ENCODE measurements at regions of chr17 and their contacts with region 1.

Region 1: DNA sequence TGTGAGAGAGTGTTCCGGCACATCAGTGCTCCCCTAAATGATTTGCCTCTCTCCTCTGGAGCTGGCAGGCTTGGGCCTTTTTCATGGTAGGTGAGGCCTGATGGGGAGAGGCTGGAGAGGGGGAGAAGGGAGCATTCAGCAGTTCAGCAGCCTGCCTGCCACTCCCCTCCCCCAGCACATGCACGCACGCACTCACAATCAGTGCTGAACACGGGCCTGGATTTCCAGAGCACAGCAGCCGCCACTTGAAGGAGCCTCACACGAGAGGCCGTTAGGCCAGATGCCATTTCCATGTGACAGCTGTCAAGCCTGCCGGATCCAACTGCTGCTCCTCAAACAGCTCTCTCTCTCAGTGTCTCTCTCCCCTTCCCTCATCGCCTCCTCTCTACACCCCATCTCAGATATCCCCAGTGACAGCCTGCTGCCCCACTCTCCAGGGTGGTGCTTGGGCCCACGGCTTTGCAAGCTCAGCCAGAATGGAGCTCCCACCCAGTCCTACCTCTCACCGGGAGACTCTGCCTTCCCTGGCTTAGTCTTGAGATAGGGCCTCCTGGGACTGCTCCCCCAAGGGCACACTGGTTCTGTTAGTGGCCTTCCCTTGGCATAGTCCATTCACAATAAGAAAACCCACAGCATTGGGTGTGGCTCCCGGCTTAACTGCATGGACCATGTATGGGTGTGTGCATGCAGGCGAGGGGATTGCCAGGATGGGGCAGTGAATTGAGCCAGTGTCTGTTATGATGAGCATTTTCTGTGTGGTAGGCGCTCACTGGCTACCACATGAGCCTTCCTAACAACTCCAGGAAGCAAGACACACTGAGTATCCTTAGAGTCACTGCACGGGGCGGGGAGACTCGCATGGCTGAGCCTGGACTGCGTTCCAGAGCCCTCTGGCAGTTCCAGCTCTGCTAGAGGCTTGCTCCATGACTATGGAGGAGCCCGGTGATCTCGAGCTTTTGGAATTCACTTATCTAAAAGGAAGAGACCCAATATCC is 226.2 kb downstream of the CCDC182 start:
- DNase-seq: peak in 1 of 2 donors; percentile 51
- ATAC-seq: no peak
- H3K4me3 ChIP-seq: no peak overlapping the region
- H3K27ac ChIP-seq: no peak overlapping the region
- H3K4me1 ChIP-seq: no peaks in the 10 kb centered on the region
- H3K27me3 ChIP-seq: no peaks in the 10 kb centered on the region

Region 2: GRCh38 chr17:57349541-57350247 is 169.2 kb before region 1 on chr17:
- intact Hi-C with region 1: loop called in 1 of 2 experiments (anchors 5 kb)
- DNase-seq: no peak
- ATAC-seq: no peak
- H3K4me3 ChIP-seq: no peak overlapping the region
- H3K27ac ChIP-seq: no peak overlapping the region
- H3K4me1 ChIP-seq: no peaks in the 10 kb centered on the region
- H3K27me3 ChIP-seq: no peaks in the 10 kb centered on the region

Region 3: GRCh38 chr17:57471868-57472368 is 47.0 kb before region 1 on chr17:
- intact Hi-C with region 1: no loop called
- DNase-seq: no peak
- ATAC-seq: no peak
- H3K4me3 ChIP-seq: no peak overlapping the region
- H3K27ac ChIP-seq: no peak overlapping the region
- H3K4me1 ChIP-seq: no peaks in the 10 kb centered on the region
- H3K27me3 ChIP-seq: no peaks in the 10 kb centered on the region